CD8-positive, alpha-beta T cell (primary cell): ENCODE measurements at regions of chr3 and their contacts with region 1.

Region 1: GRCh38 chr3:46629551-46630517 is 17.5 kb downstream of the FAM240A start:
- DNase-seq: peak; percentile 63 to 87 (median 77)
- ATAC-seq: peak; percentile 99
- H3K4me3 ChIP-seq: peak overlapping the region; percentile 40 to 62
- H3K4me3 Mint-ChIP-seq: peak overlapping the region; percentile 58
- H3K27ac ChIP-seq: peak overlapping the region in 1 of 2 experiments; percentile 35
- H3K27ac Mint-ChIP-seq: peak overlapping the region; percentile 82
- H3K4me1 ChIP-seq: peaks cover 12% of the 10 kb centered on the region
- H3K4me1 Mint-ChIP-seq: peaks cover 19% of the 10 kb centered on the region
- H3K27me3 ChIP-seq: no peaks in the 10 kb centered on the region
- H3K27me3 Mint-ChIP-seq: peaks cover 4% of the 10 kb centered on the region
- CTCF ChIP-seq: peak; percentile 99

Region 2: GRCh38 chr3:46276502-46277099 is 353.2 kb before region 1 on chr3:
- CTCF ChIA-PET with region 1: no interaction called
- POLR2A ChIA-PET with region 1: no interaction called
- intact Hi-C with region 1: no loop called
- DNase-seq: peak; percentile 59 to 86 (median 77)
- ATAC-seq: peak; percentile 80
- H3K4me3 ChIP-seq: no peak overlapping the region
- H3K4me3 Mint-ChIP-seq: no peak overlapping the region
- H3K27ac ChIP-seq: no peak overlapping the region
- H3K27ac Mint-ChIP-seq: no peak overlapping the region
- H3K4me1 ChIP-seq: peaks cover 15% of the 10 kb centered on the region
- H3K4me1 Mint-ChIP-seq: peaks cover 37% of the 10 kb centered on the region
- H3K27me3 ChIP-seq: no peaks in the 10 kb centered on the region
- H3K27me3 Mint-ChIP-seq: peaks cover 2% of the 10 kb centered on the region
- CTCF ChIP-seq: peak; percentile 79

Region 3: GRCh38 chr3:46558184-46559043 is 71.4 kb before region 1 on chr3:
- CTCF ChIA-PET with region 1: interaction called, 18 read pairs
- POLR2A ChIA-PET with region 1: no interaction called
- intact Hi-C with region 1: loop called (anchors 1 to 5 kb)
- DNase-seq: peak; percentile 37 to 89 (median 76)
- ATAC-seq: peak; percentile 97
- H3K4me3 ChIP-seq: peak overlapping the region; percentile 13 to 41
- H3K4me3 Mint-ChIP-seq: peak overlapping the region; percentile 80
- H3K27ac ChIP-seq: no peak overlapping the region
- H3K27ac Mint-ChIP-seq: peak overlapping the region; percentile 80
- H3K4me1 ChIP-seq: peaks cover 5% of the 10 kb centered on the region
- H3K4me1 Mint-ChIP-seq: peaks cover 17% of the 10 kb centered on the region
- H3K27me3 ChIP-seq: no peaks in the 10 kb centered on the region
- H3K27me3 Mint-ChIP-seq: no peaks in the 10 kb centered on the region
- CTCF ChIP-seq: peak; percentile 97

Region 4: DNA sequence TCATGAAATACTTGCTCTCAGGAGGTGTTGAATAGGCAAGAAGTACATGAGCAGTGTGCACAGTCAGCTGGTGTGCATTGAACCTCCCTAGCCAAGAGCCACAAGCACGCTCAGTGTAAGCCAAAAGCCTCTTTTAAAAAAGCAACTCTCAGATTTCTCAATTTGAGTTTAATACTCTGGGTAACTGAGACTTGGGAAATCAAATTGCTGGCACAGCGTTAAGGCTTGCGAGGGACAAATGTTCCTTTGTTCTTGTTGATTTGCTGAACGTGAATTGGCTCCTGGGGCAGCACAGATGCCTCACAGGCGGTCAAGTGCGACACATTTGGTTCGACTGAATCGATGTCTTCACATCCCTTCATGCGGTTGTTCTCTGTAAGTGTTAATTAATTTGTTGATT is 17.5 kb before region 1 on chr3 and contains the start of gene FAM240A:
- CTCF ChIA-PET with region 1: interaction called, 10 read pairs
- POLR2A ChIA-PET with region 1: no interaction called
- intact Hi-C with region 1: no loop called
- DNase-seq: no peak
- ATAC-seq: no peak
- H3K4me3 ChIP-seq: no peak within 1 kb of the TSS
- H3K4me3 Mint-ChIP-seq: no peak within 1 kb of the TSS
- H3K27ac ChIP-seq: no peak within 1 kb of the TSS
- H3K27ac Mint-ChIP-seq: no peak within 1 kb of the TSS
- H3K4me1 ChIP-seq: no peaks in the 10 kb centered on the region
- H3K4me1 Mint-ChIP-seq: no peaks in the 10 kb centered on the region
- H3K27me3 ChIP-seq: no peaks in the 10 kb centered on the region
- H3K27me3 Mint-ChIP-seq: peaks cover 9% of the 10 kb centered on the region
- CTCF ChIP-seq: no peak
- total RNA-seq, gene FAM240A: not detected

Region 5: GRCh38 chr3:46640927-46641326 is 11.1 kb after region 1 on chr3:
- CTCF ChIA-PET with region 1: interaction called, 10 read pairs
- POLR2A ChIA-PET with region 1: no interaction called
- intact Hi-C with region 1: no loop called
- DNase-seq: no peak
- ATAC-seq: no peak
- H3K4me3 ChIP-seq: no peak overlapping the region
- H3K4me3 Mint-ChIP-seq: no peak overlapping the region
- H3K27ac ChIP-seq: no peak overlapping the region
- H3K27ac Mint-ChIP-seq: no peak overlapping the region
- H3K4me1 ChIP-seq: no peaks in the 10 kb centered on the region
- H3K4me1 Mint-ChIP-seq: no peaks in the 10 kb centered on the region
- H3K27me3 ChIP-seq: no peaks in the 10 kb centered on the region
- H3K27me3 Mint-ChIP-seq: peaks cover 22% of the 10 kb centered on the region
- CTCF ChIP-seq: no peak

Region 6: DNA sequence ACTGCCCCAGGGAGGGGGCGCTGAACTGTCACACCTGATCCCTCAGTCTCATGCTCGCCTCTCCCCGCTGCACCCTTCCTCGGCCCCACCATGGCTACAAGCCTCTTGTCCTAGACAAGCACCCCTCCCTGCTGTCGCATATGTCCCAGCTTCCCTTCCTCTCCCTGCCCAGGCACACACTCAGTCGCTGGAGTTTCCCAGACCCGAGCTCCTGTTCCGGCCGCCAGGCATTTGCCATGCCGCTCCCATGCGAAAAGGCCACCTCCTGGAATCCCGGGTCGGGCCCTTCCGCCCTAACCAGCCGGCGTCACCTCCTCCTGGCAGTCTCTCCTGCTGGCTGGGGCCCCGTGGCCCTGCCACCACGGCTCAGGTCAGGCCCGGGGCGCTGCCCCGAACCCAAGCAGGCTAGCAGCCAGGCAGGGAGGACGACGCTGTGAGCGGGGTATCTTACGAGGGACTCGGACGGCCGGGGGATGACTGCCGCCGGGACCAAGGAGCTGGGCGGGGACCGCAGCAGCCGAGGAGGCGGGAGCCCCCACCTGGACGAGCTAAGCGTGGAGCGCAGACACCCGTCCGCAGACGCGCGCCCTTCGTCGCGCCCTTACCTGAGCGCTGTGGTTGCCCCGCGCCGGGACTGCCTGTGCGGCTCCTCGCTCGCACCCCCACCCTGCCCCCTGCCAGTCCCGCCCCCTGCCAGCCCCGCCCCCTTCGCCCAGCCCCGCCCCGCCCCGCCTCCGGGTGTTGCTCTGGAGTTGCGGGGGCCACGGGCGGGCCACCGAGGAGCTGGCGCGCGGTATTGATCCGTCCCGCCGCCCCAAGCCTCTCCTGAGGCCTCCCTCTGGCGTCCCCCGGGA is 63.4 kb after region 1 on chr3 and contains the start of gene ALS2CL:
- CTCF ChIA-PET with region 1: interaction called, 4 read pairs
- POLR2A ChIA-PET with region 1: no interaction called
- intact Hi-C with region 1: loop called in 1 of 2 experiments (anchors 5 kb)
- DNase-seq: peak; percentile 50 to 84 (median 76)
- ATAC-seq: peak; percentile 83
- H3K4me3 ChIP-seq: peak within 1 kb of the TSS; percentile 65 to 76
- H3K4me3 Mint-ChIP-seq: peak within 1 kb of the TSS; percentile 89
- H3K27ac ChIP-seq: peak within 1 kb of the TSS in 1 of 2 experiments; percentile 21
- H3K27ac Mint-ChIP-seq: peak within 1 kb of the TSS; percentile 85
- H3K4me1 ChIP-seq: peaks cover 55% of the 10 kb centered on the region
- H3K4me1 Mint-ChIP-seq: peaks cover 48% of the 10 kb centered on the region
- H3K27me3 ChIP-seq: no peaks in the 10 kb centered on the region
- H3K27me3 Mint-ChIP-seq: no peaks in the 10 kb centered on the region
- CTCF ChIP-seq: no peak
- total RNA-seq, gene ALS2CL: 6.8 to 7.5 TPM

Region 7: DNA sequence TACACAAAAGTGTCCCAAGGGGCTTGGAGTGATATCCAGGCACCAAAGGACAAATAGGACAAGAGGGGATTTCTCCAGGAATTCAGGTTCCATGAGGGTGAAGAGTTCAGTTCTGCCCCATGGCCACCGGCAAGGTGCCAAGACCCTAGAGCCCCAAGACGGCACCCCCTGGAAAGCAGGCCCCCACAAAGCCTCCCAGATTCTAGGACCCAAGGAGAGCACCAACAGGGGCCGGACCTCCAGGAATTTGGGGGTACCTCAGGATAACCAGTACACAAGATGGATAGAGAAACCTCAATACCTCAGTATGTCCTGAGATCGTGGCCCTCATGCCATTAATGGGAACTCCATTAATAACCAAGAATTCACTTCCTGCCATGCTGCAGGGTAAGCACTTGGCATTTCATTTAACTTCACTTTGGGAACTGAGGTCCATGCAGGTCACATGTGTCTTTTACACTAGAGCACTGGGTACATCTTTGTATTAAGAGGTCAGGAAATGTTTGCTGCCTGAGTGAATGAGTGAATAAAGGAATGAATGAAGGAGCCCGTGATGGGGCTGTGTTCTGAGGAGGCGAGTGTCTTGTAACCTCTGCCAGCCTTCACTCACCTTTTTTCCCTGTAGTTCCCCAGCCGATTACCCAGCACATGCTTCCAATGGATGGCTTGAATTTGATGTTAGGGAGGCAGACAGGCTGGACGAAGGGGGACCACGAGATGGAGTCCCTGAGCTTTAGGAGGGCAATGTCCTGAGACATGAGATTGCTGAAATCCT is 103.4 kb after region 1 on chr3:
- CTCF ChIA-PET with region 1: no interaction called
- POLR2A ChIA-PET with region 1: no interaction called
- intact Hi-C with region 1: no loop called
- DNase-seq: no peak
- ATAC-seq: no peak
- H3K4me3 ChIP-seq: no peak overlapping the region
- H3K4me3 Mint-ChIP-seq: no peak overlapping the region
- H3K27ac ChIP-seq: no peak overlapping the region
- H3K27ac Mint-ChIP-seq: no peak overlapping the region
- H3K4me1 ChIP-seq: no peaks in the 10 kb centered on the region
- H3K4me1 Mint-ChIP-seq: no peaks in the 10 kb centered on the region
- H3K27me3 ChIP-seq: no peaks in the 10 kb centered on the region
- H3K27me3 Mint-ChIP-seq: peaks cover 10% of the 10 kb centered on the region
- CTCF ChIP-seq: no peak